ENCODE measurements at regions of chr17 and their contacts with region 1.

Region 1: GRCh38 chr17:2054512-2055291 is at the start of gene HIC1:
- DNase-seq: peak; percentile 94
- H3K4me3 ChIP-seq: peak within 1 kb of the TSS; percentile 66 to 84 (median 72)
- H3K27ac ChIP-seq: peak within 1 kb of the TSS; percentile 90 to 97 (median 92)
- H3K4me1 ChIP-seq: peaks cover 54 to 86% (median 81%) of the 10 kb centered on the region in 4 donors
- H3K27me3 ChIP-seq: peaks cover 0 to 43% (median 0%) of the 10 kb centered on the region in 4 donors
- CTCF ChIP-seq: peak in 2 of 3 experiments; percentile 96 to 98
- EP300 ChIP-seq: no peak
- POLR2A ChIP-seq: peak; percentile 45
- total RNA-seq, gene HIC1: 48.6 to 86.4 (median 54.9) TPM

Region 2: DNA sequence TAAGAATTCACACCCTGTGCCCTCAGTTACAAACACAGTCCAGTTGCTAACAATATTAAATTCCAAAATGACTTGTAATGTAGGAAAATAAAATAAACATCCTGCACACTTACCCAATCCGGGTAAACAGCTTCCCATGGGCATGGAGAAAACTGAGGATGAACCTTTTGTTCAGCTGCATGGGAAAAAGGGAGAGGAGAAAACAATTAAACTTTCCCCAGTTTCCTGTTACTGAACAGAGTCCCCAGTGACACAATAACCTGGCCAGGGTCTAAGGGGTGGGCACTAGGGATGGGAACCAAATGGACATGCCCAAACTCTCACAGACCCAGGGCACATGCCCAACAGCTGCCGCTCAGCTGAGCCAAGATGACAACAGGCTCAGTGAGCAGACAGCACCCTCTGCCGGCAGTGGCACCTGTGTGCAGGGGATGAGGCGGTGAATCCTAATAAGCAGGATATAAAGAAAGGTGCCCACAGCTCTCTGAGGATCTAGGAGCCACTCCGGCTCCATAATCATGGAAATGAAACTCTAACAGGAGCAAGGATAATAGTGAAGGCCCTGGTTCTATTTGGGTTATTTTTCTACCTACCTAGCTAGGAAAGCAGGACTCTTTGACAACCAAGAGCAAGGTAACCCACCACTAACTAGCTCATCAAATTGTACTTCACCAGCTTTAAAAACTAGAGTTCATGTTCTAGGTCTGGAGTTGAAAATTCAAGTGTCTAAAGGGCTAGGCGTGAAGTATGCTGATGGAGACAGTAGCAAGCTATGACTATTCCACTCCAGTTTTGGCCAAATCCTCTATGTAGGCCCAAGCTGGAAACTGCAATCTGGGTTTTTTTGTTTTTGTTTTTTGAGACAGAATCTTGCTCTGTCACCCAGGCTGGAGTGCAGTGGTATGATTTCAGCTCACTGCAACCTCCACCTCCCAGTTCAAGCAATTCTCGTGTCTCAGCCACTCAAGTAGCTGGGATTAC is 190.1 kb after region 1 on chr17:
- intact Hi-C with region 1: loop called (anchors 1 kb)
- DNase-seq: peak; percentile 96
- H3K4me3 ChIP-seq: no peak overlapping the region
- H3K27ac ChIP-seq: peak overlapping the region; percentile 56 to 74 (median 69)
- H3K4me1 ChIP-seq: peaks cover 6 to 51% (median 36%) of the 10 kb centered on the region in 4 donors
- H3K27me3 ChIP-seq: no peaks in the 10 kb centered on the region
- CTCF ChIP-seq: peak; percentile 98
- EP300 ChIP-seq: no peak
- POLR2A ChIP-seq: no peak

Region 3: GRCh38 chr17:2351269-2351668 is 296.6 kb after region 1 on chr17:
- intact Hi-C with region 1: loop called (anchors 5 kb)
- DNase-seq: no peak
- H3K4me3 ChIP-seq: no peak overlapping the region
- H3K27ac ChIP-seq: no peak overlapping the region
- H3K4me1 ChIP-seq: peaks cover 0 to 15% (median 10%) of the 10 kb centered on the region in 4 donors
- H3K27me3 ChIP-seq: no peaks in the 10 kb centered on the region
- CTCF ChIP-seq: no peak
- EP300 ChIP-seq: no peak
- POLR2A ChIP-seq: no peak